Ascending aorta (tissue), 2 donors: ENCODE measurements at regions of chr18 and their contacts with region 1.

Region 1: DNA sequence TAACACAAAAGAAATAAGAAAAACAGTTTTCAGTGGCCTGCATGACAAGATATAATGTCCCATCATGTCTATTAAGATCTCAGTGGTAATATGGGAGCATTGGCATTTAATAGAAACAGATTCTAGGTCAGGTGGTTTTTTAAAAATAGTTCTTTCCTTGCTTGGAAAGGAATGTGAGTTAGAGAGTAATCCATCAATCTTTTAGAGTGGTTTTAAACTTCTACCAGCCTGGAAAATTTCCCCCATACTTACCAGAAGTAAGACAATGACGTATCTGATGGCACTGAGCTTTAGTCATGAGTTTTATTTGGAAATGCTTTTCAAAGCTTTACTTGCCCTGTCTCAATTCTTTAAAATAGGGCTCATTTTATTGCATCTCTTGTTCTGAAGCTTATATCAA is 441.7 kb upstream of the SMIM21 start:
- DNase-seq: no peak
- H3K4me3 ChIP-seq: no peak overlapping the region
- H3K27ac ChIP-seq: peak overlapping the region in 1 of 2 donors; percentile 53
- H3K4me1 ChIP-seq: peaks cover 0 to 4% of the 10 kb centered on the region in 2 donors
- H3K27me3 ChIP-seq: no peaks in the 10 kb centered on the region
- CTCF ChIP-seq: no peak

Region 2: DNA sequence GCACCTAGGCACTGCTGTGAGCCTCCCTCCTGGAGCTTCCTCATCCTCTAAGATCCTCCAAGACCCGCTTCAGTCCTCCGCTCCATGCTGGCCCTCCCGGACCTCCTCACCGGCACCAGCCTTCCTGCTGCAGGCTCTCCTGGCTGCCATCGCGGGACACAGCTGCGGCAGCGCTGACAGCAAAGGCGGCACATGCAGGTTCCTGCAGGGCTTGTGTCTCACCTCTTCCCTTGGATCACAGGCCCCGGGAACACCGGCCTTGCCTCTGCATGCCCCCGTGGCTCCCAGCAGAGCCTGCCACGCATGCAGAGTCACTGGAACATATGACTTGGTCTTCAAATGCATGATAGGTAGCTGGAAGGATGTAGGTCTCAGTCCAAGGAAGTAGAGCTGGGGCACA is 727.4 kb before region 1 on chr18:
- intact Hi-C with region 1: no loop called
- DNase-seq: no peak
- H3K4me3 ChIP-seq: no peak overlapping the region
- H3K27ac ChIP-seq: no peak overlapping the region
- H3K4me1 ChIP-seq: no peaks in the 10 kb centered on the region
- H3K27me3 ChIP-seq: no peaks in the 10 kb centered on the region
- CTCF ChIP-seq: no peak

Region 3: GRCh38 chr18:75538727-75539126 is 330.4 kb before region 1 on chr18:
- intact Hi-C with region 1: no loop called
- DNase-seq: no peak
- H3K4me3 ChIP-seq: no peak overlapping the region
- H3K27ac ChIP-seq: no peak overlapping the region
- H3K4me1 ChIP-seq: no peaks in the 10 kb centered on the region
- H3K27me3 ChIP-seq: no peaks in the 10 kb centered on the region
- CTCF ChIP-seq: no peak

Region 4: GRCh38 chr18:75923169-75923568 is 54.0 kb after region 1 on chr18:
- intact Hi-C with region 1: loop called (anchors 1 kb)
- DNase-seq: peak; percentile 12 to 91
- H3K4me3 ChIP-seq: no peak overlapping the region
- H3K27ac ChIP-seq: no peak overlapping the region
- H3K4me1 ChIP-seq: peaks cover 0 to 6% of the 10 kb centered on the region in 2 donors
- H3K27me3 ChIP-seq: no peaks in the 10 kb centered on the region
- CTCF ChIP-seq: no peak